ENCODE measurements at regions of chr4 and their contacts with region 1.

Region 1: DNA sequence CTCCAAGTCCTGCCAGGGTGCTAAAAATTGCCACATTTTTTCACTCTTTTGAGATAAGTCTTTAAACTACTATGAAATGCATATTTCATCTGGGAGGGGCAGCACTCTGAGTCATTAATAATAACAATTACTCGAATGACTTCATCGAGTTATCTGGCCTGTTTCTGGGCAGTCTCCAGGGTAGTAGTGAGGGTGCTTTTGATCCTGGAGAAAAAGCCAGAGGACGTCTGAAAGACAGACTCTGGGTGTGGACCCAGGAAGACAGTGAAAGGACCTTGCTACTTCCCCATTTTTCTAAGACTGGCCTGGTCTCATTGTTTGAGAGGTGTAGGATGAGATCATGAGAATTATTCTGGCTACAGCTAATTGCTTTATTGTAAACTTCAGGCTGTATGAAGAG is 42.2 kb upstream of the SRD5A3 start:
- DNase-seq: no peak
- ATAC-seq: peak; percentile 46

Region 2: GRCh38 chr4:55184600-55185523 is 119.0 kb before region 1 on chr4:
- intact Hi-C with region 1: loop called (anchors 10 kb)
- DNase-seq: no peak
- ATAC-seq: peak; percentile 68

Region 3: DNA sequence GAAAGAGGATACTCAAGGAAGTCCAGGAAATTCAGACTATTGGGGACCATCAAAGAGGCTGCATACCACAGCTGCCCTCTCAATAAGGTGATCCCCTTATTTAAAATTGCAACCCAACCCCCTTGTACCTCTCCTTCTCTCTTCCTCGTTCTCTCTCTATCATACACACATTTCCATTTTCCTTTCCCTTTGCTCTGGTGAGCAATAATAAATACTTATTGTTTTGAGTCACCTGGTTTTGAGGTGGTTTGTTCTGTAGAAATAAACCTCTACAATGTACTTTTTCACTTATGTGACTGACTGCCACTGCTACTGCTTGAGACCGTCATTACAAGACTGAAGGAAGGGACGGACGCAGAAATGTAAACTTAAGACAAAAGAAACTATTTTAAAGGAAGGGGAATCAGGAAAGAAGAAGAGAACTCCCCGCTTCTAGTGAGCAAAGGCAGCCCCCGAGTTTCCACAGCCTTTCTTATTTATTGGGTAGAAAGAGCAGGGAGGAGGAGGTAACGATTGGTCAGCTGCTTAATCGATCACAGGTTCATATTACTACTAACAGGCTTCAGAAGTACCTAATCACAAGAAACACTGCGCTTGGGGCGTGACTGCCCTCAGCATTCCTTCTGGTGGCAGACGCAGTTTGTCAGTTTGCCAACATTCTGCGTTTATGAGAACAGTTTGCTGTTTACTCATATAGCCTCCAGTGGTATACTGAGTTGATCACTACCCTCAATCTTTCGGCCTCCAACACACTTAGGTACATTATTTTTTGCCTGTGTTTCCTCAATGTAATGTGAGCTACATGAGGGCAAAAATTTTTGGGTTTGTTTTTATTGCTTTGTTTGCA is 75.0 kb after region 1 on chr4:
- intact Hi-C with region 1: no loop called
- DNase-seq: no peak
- ATAC-seq: no peak

Measured in Right ventricle myocardium inferior (tissue), 1 donor.